Dendritic cell treated with granulocyte-macrophage colony-stimulating factor and Interleukin-4, amounts not matched to agents 40 ng/mL and 50 ng/mL, for 4 days (primary cell): ENCODE measurements at regions of chr20 and their contacts with region 1.

Region 1: DNA sequence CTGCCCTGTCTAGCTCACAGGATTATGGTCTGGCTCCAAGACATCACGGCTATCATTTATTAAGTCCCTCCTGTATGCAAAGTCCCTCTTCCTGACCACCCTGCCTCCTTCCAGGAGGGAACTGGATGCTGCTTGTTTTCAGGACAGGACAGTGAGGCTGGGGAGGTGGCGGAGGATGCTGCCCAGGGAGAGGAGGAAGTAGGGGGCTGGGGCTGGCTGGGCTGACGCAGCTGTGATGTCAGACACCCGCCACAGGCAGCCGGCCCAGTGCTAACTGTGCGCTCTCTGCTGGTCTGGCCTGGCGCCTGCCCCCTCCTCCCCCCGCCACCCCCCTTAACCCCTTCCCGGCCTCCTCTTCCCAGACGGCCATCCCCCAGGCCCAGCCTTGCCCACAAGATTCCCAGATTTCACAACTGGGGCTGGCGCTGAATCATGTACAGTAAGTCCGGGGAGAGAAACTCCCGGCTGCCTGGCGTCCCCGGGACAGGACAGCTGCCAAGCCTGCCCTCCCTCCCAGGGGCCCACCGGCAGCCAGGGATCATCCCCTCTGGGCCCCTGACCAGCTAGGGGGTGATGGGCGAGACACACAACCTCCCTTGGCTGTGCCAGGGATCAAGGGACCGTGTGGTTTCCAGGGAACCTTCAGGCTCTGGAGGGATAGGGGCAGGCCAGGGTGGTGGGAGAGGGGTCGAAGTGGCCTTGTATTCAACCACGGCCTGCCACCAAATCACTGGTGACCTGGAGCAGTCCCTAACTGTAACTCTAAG is 118.1 kb downstream of the CEBPB start:
- H3K4me3 Mint-ChIP-seq: no peak overlapping the region
- H3K27ac Mint-ChIP-seq: peak overlapping the region; percentile 72
- H3K4me1 Mint-ChIP-seq: peaks cover 47% of the 10 kb centered on the region
- H3K27me3 Mint-ChIP-seq: peaks cover 10% of the 10 kb centered on the region

Region 2: DNA sequence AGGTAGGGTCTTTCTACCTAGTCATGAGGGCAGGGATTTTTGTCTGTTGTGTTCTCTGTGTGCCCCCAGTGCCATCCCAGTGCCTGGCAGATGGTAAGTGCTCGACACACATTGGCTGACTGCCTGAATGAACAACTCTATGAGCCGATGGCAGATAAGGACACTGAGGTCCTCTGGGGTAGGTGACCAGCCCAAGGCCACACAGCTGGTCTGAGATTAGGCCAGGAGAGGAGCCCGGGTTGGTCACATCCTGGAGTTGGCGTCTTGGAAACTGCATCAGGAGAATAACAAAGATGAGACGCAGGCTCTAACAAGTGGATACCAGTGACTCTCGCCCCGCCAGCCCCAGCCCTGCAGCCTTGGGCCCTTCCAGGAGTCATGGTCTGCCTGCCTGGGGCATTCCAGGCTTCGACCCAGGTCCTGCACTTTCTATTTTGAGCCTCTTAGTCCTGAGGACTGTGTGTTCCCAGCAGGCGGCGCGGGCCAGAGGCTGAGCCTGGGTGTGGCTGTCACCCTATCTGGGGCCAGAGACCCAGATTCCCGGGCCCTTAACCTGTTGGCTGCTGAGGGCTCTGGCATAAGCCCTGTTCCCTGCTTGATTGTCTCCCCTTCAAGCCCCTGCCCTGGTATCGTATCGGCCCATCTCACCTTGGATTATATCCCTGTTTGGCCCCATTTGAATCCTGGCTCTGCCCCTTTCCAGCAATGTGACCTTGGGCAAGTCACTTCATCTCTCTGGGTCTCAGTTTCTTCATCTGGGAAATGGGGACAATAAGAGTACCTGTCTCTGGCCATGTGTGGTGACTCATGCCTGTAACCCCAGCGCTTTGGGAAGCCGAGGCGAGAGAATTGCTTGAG is 29.8 kb before region 1 on chr20:
- intact Hi-C with region 1: loop called (anchors 5 kb)
- H3K4me3 Mint-ChIP-seq: no peak overlapping the region
- H3K27ac Mint-ChIP-seq: peak overlapping the region; percentile 77
- H3K4me1 Mint-ChIP-seq: peaks cover 93% of the 10 kb centered on the region
- H3K27me3 Mint-ChIP-seq: peaks cover 1% of the 10 kb centered on the region

Region 3: DNA sequence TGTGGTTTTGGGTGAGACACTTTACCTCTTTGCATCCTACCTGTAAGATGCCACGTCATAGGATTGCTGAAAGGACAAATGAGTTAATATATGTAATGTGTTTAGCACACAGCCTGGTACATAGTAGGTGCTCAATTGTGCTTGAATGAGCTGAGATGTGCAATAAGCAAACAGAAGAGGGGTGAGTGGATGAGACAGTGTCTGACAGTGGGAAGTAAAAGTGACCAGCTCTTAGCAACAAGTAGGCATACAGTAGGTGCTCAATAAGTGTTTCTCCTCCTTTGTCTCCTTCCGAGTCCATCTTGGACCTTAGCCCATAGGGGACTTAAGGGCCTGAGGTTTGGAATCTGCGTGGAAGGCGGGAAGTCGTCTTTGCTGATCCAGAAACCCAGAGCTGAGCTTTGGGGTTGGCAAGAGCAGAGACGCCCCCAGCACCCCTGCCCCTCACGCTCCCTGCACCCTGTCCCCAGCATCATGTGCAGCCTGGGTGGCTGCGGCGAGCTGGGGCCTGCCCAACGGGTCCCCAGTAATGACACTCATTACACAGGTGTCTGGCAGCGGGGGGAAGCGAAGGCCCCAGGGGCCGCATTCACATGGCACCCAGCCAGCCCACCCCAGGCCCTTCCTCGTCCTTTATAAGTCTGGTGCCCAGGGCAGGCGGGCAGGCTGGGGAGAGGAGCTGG is 13.2 kb before region 1 on chr20:
- intact Hi-C with region 1: loop called (anchors 2 kb)
- H3K4me3 Mint-ChIP-seq: no peak overlapping the region
- H3K27ac Mint-ChIP-seq: peak overlapping the region; percentile 77
- H3K4me1 Mint-ChIP-seq: peaks cover 79% of the 10 kb centered on the region
- H3K27me3 Mint-ChIP-seq: no peaks in the 10 kb centered on the region

Region 4: DNA sequence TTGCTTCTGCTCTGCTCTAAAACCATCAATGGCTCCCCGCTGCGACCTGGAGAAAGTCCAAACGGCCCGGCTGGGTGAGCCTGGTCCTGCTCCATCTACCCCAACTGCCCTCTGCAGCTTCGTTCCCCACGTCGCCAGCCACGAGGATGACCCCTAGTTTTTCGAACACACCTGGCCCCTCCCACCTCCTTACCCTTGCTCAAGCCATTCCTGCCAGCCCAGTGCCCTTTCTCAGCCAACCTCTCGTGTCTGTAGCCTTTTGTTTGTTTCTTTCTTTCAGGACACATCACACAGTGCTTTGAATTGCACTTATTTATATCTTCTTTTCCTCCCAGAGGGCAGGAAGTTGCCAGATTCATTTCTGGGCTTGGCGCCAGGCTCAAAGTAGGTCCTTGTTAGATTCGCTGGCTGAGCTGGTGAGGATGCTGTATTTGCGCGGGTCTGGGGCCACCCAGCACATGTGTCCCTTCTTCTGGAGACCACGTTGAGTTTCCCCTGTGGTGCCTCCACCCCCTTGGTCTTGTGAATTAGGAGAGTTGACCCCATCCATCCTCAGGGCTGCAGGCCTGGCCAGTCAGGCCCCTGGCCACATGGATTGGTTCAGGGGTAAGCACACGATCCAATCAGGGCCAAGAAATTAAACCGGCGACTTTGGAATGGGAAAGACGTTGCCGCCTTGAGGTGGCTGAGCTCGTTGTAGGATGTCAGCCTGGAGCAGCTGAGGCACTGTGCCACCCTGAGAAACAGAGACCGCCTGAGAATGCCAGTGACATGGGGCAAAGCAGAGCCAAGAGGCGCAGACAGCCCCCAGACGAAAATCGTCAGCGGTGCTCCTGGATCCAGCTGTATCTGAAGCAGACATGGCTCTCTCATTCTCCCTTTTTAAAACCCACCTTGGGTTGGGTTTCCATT is 37.9 kb after region 1 on chr20:
- intact Hi-C with region 1: loop called (anchors 5 kb)
- H3K4me3 Mint-ChIP-seq: peak overlapping the region; percentile 10
- H3K27ac Mint-ChIP-seq: peak overlapping the region; percentile 86
- H3K4me1 Mint-ChIP-seq: peaks cover 78% of the 10 kb centered on the region
- H3K27me3 Mint-ChIP-seq: peaks cover 9% of the 10 kb centered on the region